CD4-positive, alpha-beta memory T cell (primary cell): ENCODE measurements at regions of chr17 and their contacts with region 1.

Region 1: GRCh38 chr17:81094509-81095382 is 59.8 kb downstream of the BAIAP2 start:
- DNase-seq: peak; percentile 86 to 96 (median 88)
- H3K4me3 ChIP-seq: peak overlapping the region in 1 of 2 donors; percentile 10
- H3K4me3 Mint-ChIP-seq: peak overlapping the region; percentile 52 to 88 (median 70)
- H3K27ac ChIP-seq: peak overlapping the region; percentile 66
- H3K27ac Mint-ChIP-seq: peak overlapping the region; percentile 91 to 96 (median 93)
- H3K4me1 ChIP-seq: peaks cover 56% of the 10 kb centered on the region
- H3K4me1 Mint-ChIP-seq: peaks cover 24 to 56% (median 38%) of the 10 kb centered on the region in 4 donors
- H3K27me3 ChIP-seq: no peaks in the 10 kb centered on the region
- H3K27me3 Mint-ChIP-seq: no peaks in the 10 kb centered on the region

Region 2: GRCh38 chr17:80920441-80920840 is 174.3 kb before region 1 on chr17:
- CTCF ChIA-PET with region 1: no interaction called
- POLR2A ChIA-PET with region 1: no interaction called
- intact Hi-C with region 1: no loop called
- DNase-seq: no peak
- H3K4me3 ChIP-seq: no peak overlapping the region
- H3K4me3 Mint-ChIP-seq: no peak overlapping the region
- H3K27ac ChIP-seq: no peak overlapping the region
- H3K27ac Mint-ChIP-seq: peak overlapping the region in 1 of 7 donors; percentile 15
- H3K4me1 ChIP-seq: no peaks in the 10 kb centered on the region
- H3K4me1 Mint-ChIP-seq: no peaks in the 10 kb centered on the region
- H3K27me3 ChIP-seq: no peaks in the 10 kb centered on the region
- H3K27me3 Mint-ChIP-seq: no peaks in the 10 kb centered on the region

Region 3: DNA sequence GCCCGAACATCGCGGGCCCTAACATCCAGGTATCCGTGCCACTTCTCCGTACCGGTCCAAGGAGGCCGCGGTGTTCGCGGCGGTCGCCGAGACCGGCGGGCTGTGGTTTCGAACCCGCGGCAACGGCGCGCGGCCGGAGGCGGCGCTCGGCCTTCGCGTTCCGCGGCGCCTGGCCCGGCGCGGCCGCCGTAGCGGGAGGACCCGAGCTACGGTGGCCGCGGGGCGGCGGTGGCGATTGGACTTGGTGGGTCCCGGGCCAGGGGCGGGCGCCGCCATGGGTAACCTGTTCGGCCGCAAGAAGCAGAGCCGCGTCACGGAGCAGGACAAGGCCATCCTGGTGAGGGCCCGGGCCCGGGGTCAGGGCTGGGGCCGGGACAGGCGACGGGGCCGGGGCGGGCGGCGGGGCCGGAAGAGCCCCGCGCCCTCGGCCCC is 103.1 kb before region 1 on chr17 and contains the start of gene CHMP6:
- CTCF ChIA-PET with region 1: interaction called, 4 read pairs
- POLR2A ChIA-PET with region 1: no interaction called
- intact Hi-C with region 1: loop called (anchors 1 kb)
- DNase-seq: peak; percentile 69 to 82 (median 78)
- H3K4me3 ChIP-seq: peak within 1 kb of the TSS; percentile 52 to 63
- H3K4me3 Mint-ChIP-seq: peak within 1 kb of the TSS; percentile 79 to 86 (median 84)
- H3K27ac ChIP-seq: peak within 1 kb of the TSS; percentile 70
- H3K27ac Mint-ChIP-seq: peak within 1 kb of the TSS; percentile 66 to 91 (median 86)
- H3K4me1 ChIP-seq: peaks cover 33% of the 10 kb centered on the region
- H3K4me1 Mint-ChIP-seq: peaks cover 9 to 34% (median 21%) of the 10 kb centered on the region in 4 donors
- H3K27me3 ChIP-seq: no peaks in the 10 kb centered on the region
- H3K27me3 Mint-ChIP-seq: peaks cover 0 to 1% of the 10 kb centered on the region in 2 donors
- total RNA-seq, gene CHMP6: 41.4 to 42.3 TPM

Region 4: GRCh38 chr17:81018044-81018802 is 76.5 kb before region 1 on chr17:
- CTCF ChIA-PET with region 1: interaction called, 28 read pairs
- POLR2A ChIA-PET with region 1: interaction called, 12 read pairs
- intact Hi-C with region 1: no loop called
- DNase-seq: peak in 4 of 5 donors; percentile 39 to 49 (median 44)
- H3K4me3 ChIP-seq: peak overlapping the region; percentile 20 to 54
- H3K4me3 Mint-ChIP-seq: peak overlapping the region; percentile 82 to 95 (median 86)
- H3K27ac ChIP-seq: peak overlapping the region; percentile 69
- H3K27ac Mint-ChIP-seq: peak overlapping the region; percentile 80 to 98 (median 95)
- H3K4me1 ChIP-seq: peaks cover 32% of the 10 kb centered on the region
- H3K4me1 Mint-ChIP-seq: peaks cover 15 to 52% (median 29%) of the 10 kb centered on the region in 4 donors
- H3K27me3 ChIP-seq: no peaks in the 10 kb centered on the region
- H3K27me3 Mint-ChIP-seq: no peaks in the 10 kb centered on the region

Region 5: GRCh38 chr17:81025741-81026129 is 69.0 kb before region 1 on chr17:
- CTCF ChIA-PET with region 1: interaction called, 28 read pairs
- POLR2A ChIA-PET with region 1: interaction called, 9 read pairs
- intact Hi-C with region 1: no loop called
- DNase-seq: no peak
- H3K4me3 ChIP-seq: no peak overlapping the region
- H3K4me3 Mint-ChIP-seq: no peak overlapping the region
- H3K27ac ChIP-seq: no peak overlapping the region
- H3K27ac Mint-ChIP-seq: no peak overlapping the region
- H3K4me1 ChIP-seq: peaks cover 8% of the 10 kb centered on the region
- H3K4me1 Mint-ChIP-seq: peaks cover 6 to 11% (median 8%) of the 10 kb centered on the region in 4 donors
- H3K27me3 ChIP-seq: no peaks in the 10 kb centered on the region
- H3K27me3 Mint-ChIP-seq: peaks cover 7 to 14% of the 10 kb centered on the region in 2 donors

Region 6: DNA sequence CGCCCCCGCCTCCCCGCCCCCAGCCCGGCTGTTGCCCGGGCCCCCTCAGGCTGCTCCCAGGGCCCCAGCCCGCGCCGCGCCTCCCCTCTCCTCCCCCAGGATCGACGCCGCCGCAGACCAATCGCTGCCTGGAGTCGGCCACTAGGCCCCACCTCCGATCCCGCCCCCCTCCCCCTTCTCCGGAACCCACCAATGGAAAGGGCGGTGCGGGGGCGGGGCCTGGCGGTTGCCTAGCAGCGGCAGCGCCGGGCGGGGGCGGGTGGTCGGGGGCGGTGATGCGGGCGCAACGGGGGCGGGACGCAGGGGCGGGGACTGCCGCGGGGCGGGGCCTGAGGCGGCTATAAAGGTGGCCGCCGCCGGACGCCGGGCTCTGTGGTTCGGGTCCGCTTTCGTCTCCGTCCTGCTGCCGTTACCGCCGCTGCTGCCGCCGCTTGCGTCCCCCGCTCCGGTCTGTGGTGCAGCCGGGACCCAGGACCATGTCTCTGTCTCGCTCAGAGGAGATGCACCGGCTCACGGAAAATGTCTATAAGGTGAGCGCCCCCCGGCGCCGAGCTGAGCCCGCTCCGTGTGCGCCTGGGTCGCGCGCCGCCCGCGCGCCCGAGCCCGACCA is 59.9 kb before region 1 on chr17 and contains the start of gene BAIAP2:
- CTCF ChIA-PET with region 1: no interaction called
- POLR2A ChIA-PET with region 1: interaction called, 3 read pairs
- intact Hi-C with region 1: loop called (anchors 1 kb)
- DNase-seq: peak; percentile 93
- H3K4me3 ChIP-seq: peak within 1 kb of the TSS in 1 of 2 donors; percentile 49
- H3K4me3 Mint-ChIP-seq: peak within 1 kb of the TSS; percentile 88 to 95 (median 92)
- H3K27ac ChIP-seq: no peak within 1 kb of the TSS
- H3K27ac Mint-ChIP-seq: peak within 1 kb of the TSS; percentile 86 to 93 (median 89)
- H3K4me1 ChIP-seq: peaks cover 20% of the 10 kb centered on the region
- H3K4me1 Mint-ChIP-seq: peaks cover 8 to 30% (median 14%) of the 10 kb centered on the region in 4 donors
- H3K27me3 ChIP-seq: no peaks in the 10 kb centered on the region
- H3K27me3 Mint-ChIP-seq: peaks cover 0 to 13% of the 10 kb centered on the region in 2 donors
- total RNA-seq, gene BAIAP2: 5.4 to 7.2 TPM